ENCODE measurements at regions of chr19 and their contacts with region 1.

Region 1: DNA sequence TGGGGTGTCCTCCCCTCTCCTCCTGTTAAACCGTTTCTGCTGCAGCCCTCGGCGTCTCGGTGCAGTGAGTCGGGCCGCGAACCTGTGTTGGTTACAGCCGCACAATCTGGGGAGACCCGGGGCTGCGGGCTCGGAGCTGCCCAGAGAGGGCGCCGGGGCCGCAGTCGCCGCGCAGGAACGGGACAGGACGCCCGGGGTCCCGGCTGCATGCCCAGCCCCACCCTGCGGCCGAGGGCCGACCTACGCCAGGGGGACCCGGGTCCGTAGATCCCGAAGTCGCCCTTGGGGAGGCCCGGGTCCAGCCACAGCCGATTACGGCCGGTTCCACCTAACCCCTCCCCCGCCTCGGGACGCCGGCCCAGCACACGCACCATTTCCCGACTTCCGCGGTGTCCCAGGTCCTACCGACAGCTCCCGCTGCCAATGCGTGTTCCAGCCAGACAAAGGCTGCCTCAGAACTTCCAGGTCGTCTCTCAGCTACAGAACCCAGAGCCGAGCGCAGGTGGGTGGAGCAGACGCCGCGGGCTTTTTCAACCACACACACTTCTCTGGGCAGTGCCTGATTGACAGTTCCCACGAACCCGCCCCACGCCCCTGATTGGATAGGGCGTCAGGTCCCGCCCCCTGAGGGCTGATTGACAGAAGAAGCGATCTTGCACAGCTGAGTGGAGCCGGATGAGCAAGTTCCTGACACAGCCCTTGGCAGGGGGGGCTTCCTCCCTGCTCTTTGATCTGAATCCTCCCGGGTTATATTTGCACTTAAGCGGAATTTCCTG is at the start of gene ZNF443:
- DNase-seq: peak; percentile 99
- H3K4me3 Mint-ChIP-seq: peak within 1 kb of the TSS; percentile 100
- H3K27ac Mint-ChIP-seq: peak within 1 kb of the TSS; percentile 97
- H3K4me1 Mint-ChIP-seq: peaks cover 9% of the 10 kb centered on the region
- H3K27me3 Mint-ChIP-seq: no peaks in the 10 kb centered on the region
- total RNA-seq, gene ZNF443: 4.3 and 4.5 TPM in 2 replicates

Region 2: DNA sequence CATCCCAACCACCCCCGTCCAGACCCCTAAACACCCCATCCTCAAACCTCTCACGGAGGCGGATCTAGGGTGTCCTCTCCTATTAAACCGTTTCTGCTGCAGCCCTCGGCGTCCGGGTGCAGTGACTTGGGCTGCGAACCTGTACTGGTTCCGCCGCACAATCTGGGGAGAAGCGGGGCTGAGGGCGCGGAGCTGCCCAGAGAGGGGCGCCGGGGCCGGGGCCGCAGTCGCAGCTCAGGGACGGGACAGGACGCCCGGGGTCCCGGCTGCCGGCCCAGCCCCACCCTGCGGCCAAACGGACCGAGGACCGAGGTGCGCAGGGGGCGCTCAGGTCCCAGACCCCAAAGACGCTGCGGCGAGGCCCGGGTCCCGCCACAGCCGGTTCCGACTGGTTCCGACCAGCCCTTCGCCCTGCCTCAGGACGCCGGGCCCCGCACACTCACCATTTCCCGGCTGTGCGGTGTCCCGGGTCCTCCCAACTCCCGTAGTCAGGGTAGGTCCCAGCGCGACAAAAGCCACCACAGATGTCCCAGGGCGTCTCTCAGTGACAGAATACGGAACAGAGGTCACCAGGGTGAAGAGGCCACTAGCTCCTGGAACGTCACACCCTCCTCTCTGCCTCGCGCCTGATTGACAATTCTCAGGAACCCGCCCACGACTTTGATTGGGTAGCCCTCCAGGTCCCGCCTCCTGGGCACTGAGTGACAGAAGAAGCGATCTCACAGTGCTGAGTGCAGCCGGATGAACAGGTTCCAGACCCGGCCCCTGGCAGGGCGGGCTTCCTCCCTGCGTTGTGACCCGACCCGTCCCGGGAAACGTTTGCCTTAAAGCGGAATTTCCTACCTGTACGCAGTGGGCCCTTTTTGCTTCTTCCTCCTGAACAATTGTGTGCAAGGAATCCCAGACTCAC is 146.2 kb before region 1 on chr19 and contains the start of gene ZNF44:
- intact Hi-C with region 1: loop called (anchors 2 kb)
- DNase-seq: peak; percentile 96
- H3K4me3 Mint-ChIP-seq: peak within 1 kb of the TSS; percentile 100
- H3K27ac Mint-ChIP-seq: peak within 1 kb of the TSS; percentile 99
- H3K4me1 Mint-ChIP-seq: peaks cover 22% of the 10 kb centered on the region
- H3K27me3 Mint-ChIP-seq: no peaks in the 10 kb centered on the region
- total RNA-seq, gene ZNF44: 8.6 and 8.7 TPM in 2 replicates

Region 3: DNA sequence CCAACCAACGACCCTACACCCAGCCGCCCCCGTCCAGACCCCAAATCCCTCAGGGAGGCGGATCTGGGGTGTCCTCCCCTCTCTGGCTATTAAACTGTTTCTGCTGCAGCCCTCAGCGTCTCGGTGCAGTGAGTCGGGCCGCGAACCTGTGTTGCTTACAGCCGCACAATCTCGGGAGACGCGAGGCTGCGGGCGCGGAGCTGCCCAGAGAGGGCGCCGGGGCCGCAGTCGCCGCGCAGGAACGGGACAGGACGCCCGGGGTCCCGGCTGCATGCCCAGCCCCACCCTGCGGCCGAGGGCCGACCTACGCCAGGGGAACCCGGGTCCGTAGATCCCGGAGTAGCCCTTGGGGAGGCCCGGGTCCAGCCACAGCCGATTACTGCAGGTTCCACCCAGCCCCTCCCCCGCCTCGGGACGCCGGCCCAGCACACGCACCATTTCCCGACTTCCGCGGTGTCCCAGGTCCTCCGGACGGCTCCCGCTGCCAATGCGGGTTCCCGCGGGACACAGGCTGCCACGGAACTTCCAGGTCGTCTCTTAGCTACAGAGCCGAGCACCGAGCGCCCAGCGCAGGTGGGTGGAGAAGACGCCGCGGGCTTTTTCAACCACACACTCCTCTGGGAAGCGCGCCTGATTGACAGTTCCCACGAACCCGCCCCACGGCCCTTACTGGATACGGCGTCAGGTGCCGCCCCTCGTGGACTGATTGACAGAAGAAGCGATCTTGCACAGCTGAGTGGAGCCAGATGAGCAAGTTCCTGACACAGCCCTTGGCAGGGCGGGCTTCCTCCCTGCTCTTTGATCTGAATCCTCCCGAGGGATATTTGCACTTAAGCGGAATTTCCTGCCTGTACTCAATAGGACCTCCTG is 39.9 kb before region 1 on chr19 and contains the start of gene ZNF799:
- intact Hi-C with region 1: loop called (anchors 5 kb)
- DNase-seq: peak; percentile 82
- H3K4me3 Mint-ChIP-seq: peak within 1 kb of the TSS; percentile 93
- H3K27ac Mint-ChIP-seq: peak within 1 kb of the TSS; percentile 69
- H3K4me1 Mint-ChIP-seq: peaks cover 7% of the 10 kb centered on the region
- H3K27me3 Mint-ChIP-seq: no peaks in the 10 kb centered on the region
- total RNA-seq, gene ZNF799: 3.8 and 5.3 TPM in 2 replicates

Region 4: GRCh38 chr19:12484371-12485051 is 43.8 kb after region 1 on chr19 and contains the start of gene ZNF709:
- intact Hi-C with region 1: loop called (anchors 2 kb)
- DNase-seq: peak; percentile 79
- H3K4me3 Mint-ChIP-seq: peak within 1 kb of the TSS; percentile 87
- H3K27ac Mint-ChIP-seq: peak within 1 kb of the TSS; percentile 63
- H3K4me1 Mint-ChIP-seq: peaks cover 17% of the 10 kb centered on the region
- H3K27me3 Mint-ChIP-seq: no peaks in the 10 kb centered on the region
- total RNA-seq, gene ZNF709: 0.18 and 2.4 TPM in 2 replicates

Measured in activated T-helper 2 cell treated with anti-CD3 and anti-CD28 coated beads, Interferon-gamma antibody, Interleukin-2, Interleukin-4, amounts not matched to agents 10 μg/mL and 5 μg/mL and 100 μg/mL, durations not matched to agents 14 hours and 24 hours and 36 hours (primary cell).